ENCODE measurements at regions of chr6 and their contacts with region 1.

Region 1: DNA sequence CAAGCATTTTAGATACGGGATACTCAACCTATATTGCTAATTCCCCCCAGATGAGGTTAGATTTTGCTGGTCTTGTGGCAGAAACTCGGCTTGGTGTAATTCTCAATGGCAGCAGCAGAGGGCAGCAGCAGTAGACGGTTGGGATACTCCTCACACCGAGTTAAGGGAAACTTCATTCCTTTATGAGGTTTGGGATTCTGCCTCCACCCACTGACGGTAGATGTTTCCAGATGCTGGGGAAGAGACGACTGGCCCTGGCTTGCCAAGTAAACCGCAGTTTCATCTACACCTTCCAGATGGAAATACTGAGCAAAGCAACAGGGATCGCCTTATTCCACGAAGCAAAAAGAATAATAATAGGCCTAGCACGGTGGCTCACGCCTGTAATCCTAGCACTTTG is 8.2 kb upstream of the TBC1D7 start:
- DNase-seq: peak; percentile 69
- CTCF ChIP-seq: peak; percentile 82

Region 2: GRCh38 chr6:12911387-12911960 is 425.1 kb before region 1 on chr6:
- in situ Hi-C with region 1: loop called (anchors 5 kb)
- DNase-seq: peak; percentile 31
- CTCF ChIP-seq: peak; percentile 42

Region 3: GRCh38 chr6:13194852-13195251 is 141.7 kb before region 1 on chr6:
- in situ Hi-C with region 1: loop called (anchors 10 kb)
- DNase-seq: peak; percentile 78
- CTCF ChIP-seq: peak; percentile 70

Region 4: GRCh38 chr6:13217206-13217905 is 119.2 kb before region 1 on chr6:
- in situ Hi-C with region 1: no loop called
- DNase-seq: no peak
- CTCF ChIP-seq: no peak

Region 5: DNA sequence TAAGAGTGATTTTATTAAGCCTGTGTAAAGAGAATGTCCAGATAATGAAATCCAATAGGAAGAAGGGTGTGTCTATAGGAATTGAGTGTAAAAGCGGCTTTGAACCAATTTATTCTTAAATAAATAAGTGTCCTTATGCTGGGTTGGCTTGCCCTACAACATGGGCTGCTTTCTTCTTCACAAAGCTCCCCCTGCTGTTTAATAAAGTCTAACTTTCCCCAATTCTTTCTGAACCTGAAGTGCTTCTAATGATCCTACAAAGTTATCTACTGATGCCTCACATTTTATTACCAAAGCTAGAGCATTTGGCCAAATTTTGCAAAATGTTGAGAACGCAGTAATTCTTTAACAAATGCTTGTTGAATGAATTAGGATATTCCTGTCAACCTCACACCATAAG is 201.5 kb after region 1 on chr6:
- in situ Hi-C with region 1: loop called (anchors 10 kb)
- DNase-seq: peak; percentile 67
- CTCF ChIP-seq: peak; percentile 24

Measured in GM13976 (cell line).